OCI-LY7 (cell line): ENCODE measurements at regions of chr7 and their contacts with region 1.

Region 1: DNA sequence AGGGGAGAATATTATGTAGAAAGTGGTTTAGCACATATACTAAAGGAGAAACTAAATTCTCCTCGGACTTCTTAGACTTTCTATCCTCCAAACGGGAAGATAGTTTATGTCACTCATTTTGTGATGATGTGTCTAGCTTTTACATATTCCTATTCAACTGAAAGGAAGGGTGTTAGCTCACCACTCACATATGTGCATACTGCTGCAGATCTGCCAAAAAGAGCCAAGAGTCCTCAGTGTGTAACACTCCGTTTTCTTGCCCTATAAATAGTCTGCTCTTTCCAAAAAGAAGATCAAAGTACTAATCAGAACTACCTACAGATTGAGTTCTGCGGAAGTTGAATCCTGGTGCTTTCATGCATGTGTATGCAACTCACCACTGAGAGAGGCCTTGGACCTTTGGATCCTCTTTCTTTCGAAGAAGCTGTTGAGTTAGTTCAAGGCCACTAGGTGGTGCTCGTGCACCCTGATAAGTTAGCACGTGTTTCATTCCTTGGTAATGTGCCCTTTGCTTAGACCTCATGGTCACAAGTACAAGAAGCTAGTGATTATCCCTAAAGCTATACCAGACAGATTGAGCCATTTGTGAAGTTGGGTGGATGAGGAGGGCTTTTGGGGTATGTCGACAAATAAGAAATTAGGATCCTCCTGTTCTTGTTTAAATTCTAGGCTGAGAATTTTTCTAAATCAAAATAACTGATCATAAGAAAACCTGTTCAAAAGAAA is 14.1 kb downstream of the YAE1 start:
- DNase-seq: peak; percentile 91
- H3K4me3 ChIP-seq: no peak overlapping the region
- H3K27ac ChIP-seq: no peak overlapping the region
- H3K4me1 ChIP-seq: no peaks in the 10 kb centered on the region
- CTCF ChIP-seq: peak; percentile 94

Region 2: GRCh38 chr7:39566023-39566921 is 14.0 kb before region 1 on chr7 and contains the start of gene YAE1:
- CTCF ChIA-PET with region 1: interaction called, 6 read pairs
- POLR2A ChIA-PET with region 1: interaction called, 13 read pairs
- intact Hi-C with region 1: no loop called
- DNase-seq: peak; percentile 86
- H3K4me3 ChIP-seq: peak within 1 kb of the TSS; percentile 88
- H3K27ac ChIP-seq: peak within 1 kb of the TSS; percentile 38
- H3K4me1 ChIP-seq: peaks cover 14% of the 10 kb centered on the region
- CTCF ChIP-seq: no peak
- total RNA-seq, gene YAE1: 25.5 and 37.5 TPM in 2 replicates

Region 3: GRCh38 chr7:39746103-39746819 is 165.9 kb after region 1 on chr7:
- CTCF ChIA-PET with region 1: interaction called, 18 read pairs
- POLR2A ChIA-PET with region 1: interaction called, 4 read pairs
- intact Hi-C with region 1: loop called (anchors 1 kb)
- DNase-seq: peak; percentile 64
- H3K4me3 ChIP-seq: no peak overlapping the region
- H3K27ac ChIP-seq: no peak overlapping the region
- H3K4me1 ChIP-seq: no peaks in the 10 kb centered on the region
- CTCF ChIP-seq: peak; percentile 93

Region 4: GRCh38 chr7:39808796-39809481 is 228.6 kb after region 1 on chr7:
- CTCF ChIA-PET with region 1: no interaction called
- POLR2A ChIA-PET with region 1: no interaction called
- intact Hi-C with region 1: loop called (anchors 5 kb)
- DNase-seq: no peak
- H3K4me3 ChIP-seq: no peak overlapping the region
- H3K27ac ChIP-seq: no peak overlapping the region
- H3K4me1 ChIP-seq: no peaks in the 10 kb centered on the region
- CTCF ChIP-seq: no peak

Region 5: GRCh38 chr7:40057292-40057691 is 477.0 kb after region 1 on chr7:
- CTCF ChIA-PET with region 1: no interaction called
- POLR2A ChIA-PET with region 1: no interaction called
- intact Hi-C with region 1: loop called (anchors 5 kb)
- DNase-seq: no peak
- H3K4me3 ChIP-seq: no peak overlapping the region
- H3K27ac ChIP-seq: no peak overlapping the region
- H3K4me1 ChIP-seq: no peaks in the 10 kb centered on the region
- CTCF ChIP-seq: no peak